ENCODE measurements at regions of chr3 and their contacts with region 1.

Region 1: DNA sequence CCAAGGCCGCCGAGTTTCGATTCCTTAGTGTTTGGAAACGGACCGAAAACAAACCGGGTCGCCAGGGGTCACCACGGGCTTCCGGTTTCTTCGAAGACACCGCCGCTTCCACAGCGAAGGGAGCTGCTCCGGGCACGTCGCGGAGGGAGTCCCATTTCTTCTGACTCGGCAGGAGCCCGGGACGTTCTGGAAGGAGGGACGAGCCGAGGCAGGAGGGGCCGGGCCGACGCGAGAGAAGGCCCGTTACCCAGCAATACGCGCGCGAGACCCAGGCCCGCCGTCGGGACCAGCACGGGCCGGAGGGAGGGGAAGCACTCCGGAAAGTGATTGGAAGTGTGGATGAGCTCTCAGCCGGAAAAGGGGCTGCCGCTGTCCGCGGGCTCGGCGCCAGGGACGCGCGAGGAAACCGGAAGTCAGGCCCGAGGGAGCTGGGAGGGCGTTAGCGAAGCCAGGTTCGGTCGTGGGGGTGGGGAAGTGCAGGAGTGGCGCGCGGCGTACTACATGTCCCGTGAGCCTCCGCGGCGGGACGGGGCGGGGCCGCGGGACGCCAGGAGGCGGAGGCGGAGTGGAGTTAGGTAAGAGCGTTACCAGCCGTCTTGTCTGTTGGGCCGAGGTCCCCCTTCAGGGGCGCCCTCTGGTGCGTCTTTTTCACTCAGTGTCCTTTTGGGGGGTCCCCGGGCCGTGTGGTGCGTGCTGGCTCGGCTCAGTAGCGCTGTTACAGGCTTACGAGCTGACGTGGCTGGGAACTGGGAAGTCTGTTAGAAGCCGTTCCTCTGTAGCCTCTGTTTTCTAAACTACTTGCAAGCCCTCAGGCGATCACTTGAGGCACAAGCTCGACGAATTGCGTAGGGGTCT is at the starts of genes AZI2 and ZCWPW2:
- DNase-seq: peak; percentile 90 to 94 (median 91)
- H3K4me3 ChIP-seq: peak within 1 kb of the TSS; percentile 85 to 94
- H3K4me3 Mint-ChIP-seq: peak within 1 kb of the TSS; percentile 93 to 99 (median 97)
- H3K27ac ChIP-seq: peak within 1 kb of the TSS; percentile 94
- H3K27ac Mint-ChIP-seq: peak within 1 kb of the TSS; percentile 97 to 100 (median 98)
- H3K4me1 ChIP-seq: peaks cover 50% of the 10 kb centered on the region
- H3K4me1 Mint-ChIP-seq: peaks cover 38 to 64% (median 51%) of the 10 kb centered on the region in 4 donors
- H3K27me3 ChIP-seq: no peaks in the 10 kb centered on the region
- H3K27me3 Mint-ChIP-seq: no peaks in the 10 kb centered on the region
- total RNA-seq, gene AZI2: 40.3 to 44.5 TPM
- total RNA-seq, gene ZCWPW2: 0.61 to 1.5 TPM

Region 2: DNA sequence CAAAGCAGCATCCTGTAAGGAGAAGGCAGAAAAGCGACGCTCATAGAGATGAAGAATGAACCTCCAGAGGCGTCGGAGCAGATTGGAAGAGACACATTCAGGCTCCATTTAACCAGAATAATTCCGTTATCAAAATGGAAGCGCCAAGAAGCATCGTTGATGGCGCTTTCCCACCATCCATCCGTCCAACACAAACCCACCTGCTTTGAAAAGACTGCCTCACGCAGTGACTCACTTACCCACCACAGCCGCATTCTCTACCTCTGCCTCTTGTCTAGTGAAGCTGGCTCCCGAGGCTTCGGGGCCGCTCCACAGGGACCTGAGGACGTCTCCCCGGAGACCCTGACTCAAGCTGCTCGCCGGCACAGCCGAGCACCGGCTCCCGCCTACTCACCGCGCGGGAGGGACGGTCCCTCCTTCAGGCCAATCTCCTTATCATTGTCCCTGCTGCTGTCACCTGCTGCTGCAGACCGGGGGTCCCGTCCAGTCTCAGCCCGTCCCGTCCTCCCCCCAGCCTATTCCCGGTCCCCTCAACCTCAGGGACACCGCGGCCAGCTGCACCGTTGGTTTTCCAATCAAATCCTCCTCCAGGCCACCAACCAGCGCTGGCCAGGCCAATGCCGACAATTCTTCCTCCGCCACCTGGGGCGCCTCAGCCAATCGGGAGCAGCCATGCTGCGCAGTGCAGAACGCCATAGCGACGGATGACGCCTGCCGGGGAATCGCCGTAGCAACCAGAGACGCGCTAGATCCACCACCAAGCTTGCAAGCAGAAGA is 979.8 kb before region 1 on chr3 and contains the start of gene NEK10:
- CTCF ChIA-PET with region 1: no interaction called
- POLR2A ChIA-PET with region 1: interaction called, 3 read pairs
- intact Hi-C with region 1: loop called (anchors 2 kb)
- DNase-seq: peak; percentile 91 to 94 (median 93)
- H3K4me3 ChIP-seq: peak within 1 kb of the TSS; percentile 64 to 81
- H3K4me3 Mint-ChIP-seq: peak within 1 kb of the TSS; percentile 91 to 97 (median 96)
- H3K27ac ChIP-seq: peak within 1 kb of the TSS; percentile 39
- H3K27ac Mint-ChIP-seq: peak within 1 kb of the TSS; percentile 80 to 98 (median 94)
- H3K4me1 ChIP-seq: peaks cover 11% of the 10 kb centered on the region
- H3K4me1 Mint-ChIP-seq: peaks cover 12 to 20% (median 17%) of the 10 kb centered on the region in 4 donors
- H3K27me3 ChIP-seq: no peaks in the 10 kb centered on the region
- H3K27me3 Mint-ChIP-seq: no peaks in the 10 kb centered on the region
- total RNA-seq, gene NEK10: 1.4 to 2.7 TPM

Region 3: GRCh38 chr3:28241221-28242160 is 107.4 kb before region 1 on chr3 and contains the start of gene CMC1:
- CTCF ChIA-PET with region 1: no interaction called
- POLR2A ChIA-PET with region 1: interaction called, 7 read pairs
- intact Hi-C with region 1: loop called (anchors 1 kb)
- DNase-seq: peak; percentile 81 to 92 (median 83)
- H3K4me3 ChIP-seq: peak within 1 kb of the TSS; percentile 82 to 83
- H3K4me3 Mint-ChIP-seq: peak within 1 kb of the TSS; percentile 93 to 97 (median 96)
- H3K27ac ChIP-seq: peak within 1 kb of the TSS; percentile 73
- H3K27ac Mint-ChIP-seq: peak within 1 kb of the TSS; percentile 47 to 96 (median 93)
- H3K4me1 ChIP-seq: peaks cover 51% of the 10 kb centered on the region
- H3K4me1 Mint-ChIP-seq: peaks cover 36 to 62% (median 43%) of the 10 kb centered on the region in 4 donors
- H3K27me3 ChIP-seq: no peaks in the 10 kb centered on the region
- H3K27me3 Mint-ChIP-seq: no peaks in the 10 kb centered on the region
- total RNA-seq, gene CMC1: 15.9 to 18.4 TPM

Region 4: DNA sequence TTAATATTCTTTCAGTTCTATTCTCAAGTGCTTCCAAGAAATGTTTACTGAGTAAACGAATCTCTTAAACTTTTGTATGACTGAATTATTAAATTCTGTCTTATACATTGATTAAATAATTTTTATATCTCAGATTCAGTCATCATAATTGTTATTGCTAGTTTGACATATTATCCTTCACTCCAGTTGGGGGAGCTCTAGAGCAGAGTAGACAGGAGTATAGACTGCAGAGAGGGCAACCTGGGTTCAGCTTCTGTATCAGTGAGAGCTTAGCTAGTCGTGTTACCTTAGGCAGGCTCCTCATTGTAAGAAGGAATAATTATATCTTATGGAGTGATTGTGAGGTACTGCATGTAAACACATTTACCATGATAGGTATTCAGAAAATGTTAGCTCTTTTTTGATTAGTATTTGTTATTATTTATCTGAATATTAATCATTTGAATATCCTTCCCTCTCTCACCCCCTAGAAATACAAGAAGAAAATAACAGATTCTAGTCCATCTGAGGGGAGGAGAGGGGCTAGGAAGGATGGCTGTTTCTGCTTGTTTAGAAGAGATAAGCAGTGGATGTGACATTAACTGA is 31.3 kb before region 1 on chr3:
- CTCF ChIA-PET with region 1: interaction called, 6 read pairs
- POLR2A ChIA-PET with region 1: interaction called, 10 read pairs
- intact Hi-C with region 1: no loop called
- DNase-seq: peak; percentile 46 to 58 (median 55)
- H3K4me3 ChIP-seq: no peak overlapping the region
- H3K4me3 Mint-ChIP-seq: no peak overlapping the region
- H3K27ac ChIP-seq: no peak overlapping the region
- H3K27ac Mint-ChIP-seq: no peak overlapping the region
- H3K4me1 ChIP-seq: no peaks in the 10 kb centered on the region
- H3K4me1 Mint-ChIP-seq: peaks cover 3 to 17% (median 13%) of the 10 kb centered on the region in 4 donors
- H3K27me3 ChIP-seq: no peaks in the 10 kb centered on the region
- H3K27me3 Mint-ChIP-seq: no peaks in the 10 kb centered on the region

Region 5: DNA sequence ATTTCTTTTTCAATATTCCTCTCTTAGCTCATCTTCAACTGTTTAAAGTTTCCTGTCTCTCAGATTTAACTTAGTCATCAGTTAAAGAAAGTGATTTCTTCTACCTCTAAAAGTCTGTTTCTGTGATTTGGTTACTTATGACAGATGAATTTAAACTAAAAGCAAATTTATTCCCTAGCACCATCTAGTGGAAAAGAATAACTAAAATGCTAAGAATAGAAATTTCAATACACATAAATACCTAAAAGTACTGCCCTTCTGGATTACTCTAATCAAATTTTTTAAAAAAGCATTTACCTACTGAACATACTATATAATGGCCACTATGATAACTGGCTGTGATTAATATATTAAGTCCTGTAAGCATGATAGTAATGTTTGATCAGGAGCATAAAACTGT is 14.3 kb before region 1 on chr3:
- CTCF ChIA-PET with region 1: interaction called, 13 read pairs
- POLR2A ChIA-PET with region 1: interaction called, 12 read pairs
- intact Hi-C with region 1: loop called (anchors 2 kb)
- DNase-seq: no peak
- H3K4me3 ChIP-seq: no peak overlapping the region
- H3K4me3 Mint-ChIP-seq: no peak overlapping the region
- H3K27ac ChIP-seq: no peak overlapping the region
- H3K27ac Mint-ChIP-seq: peak overlapping the region in 2 of 7 donors; percentile 29 to 40
- H3K4me1 ChIP-seq: no peaks in the 10 kb centered on the region
- H3K4me1 Mint-ChIP-seq: peaks cover 5 to 14% (median 5%) of the 10 kb centered on the region in 4 donors
- H3K27me3 ChIP-seq: no peaks in the 10 kb centered on the region
- H3K27me3 Mint-ChIP-seq: no peaks in the 10 kb centered on the region

Region 6: GRCh38 chr3:28637742-28638141 is 288.9 kb after region 1 on chr3:
- CTCF ChIA-PET with region 1: no interaction called
- POLR2A ChIA-PET with region 1: no interaction called
- intact Hi-C with region 1: no loop called
- DNase-seq: no peak
- H3K4me3 ChIP-seq: no peak overlapping the region
- H3K4me3 Mint-ChIP-seq: no peak overlapping the region
- H3K27ac ChIP-seq: no peak overlapping the region
- H3K27ac Mint-ChIP-seq: no peak overlapping the region
- H3K4me1 ChIP-seq: no peaks in the 10 kb centered on the region
- H3K4me1 Mint-ChIP-seq: no peaks in the 10 kb centered on the region
- H3K27me3 ChIP-seq: no peaks in the 10 kb centered on the region
- H3K27me3 Mint-ChIP-seq: peaks cover 0 to 2% of the 10 kb centered on the region in 2 donors

Measured in CD4-positive, alpha-beta memory T cell (primary cell).